Dorsolateral prefrontal cortex (tissue), 120 donors: ENCODE measurements at regions of chr5 and their contacts with region 1.

Region 1: GRCh38 chr5:141618804-141619554 is at the start of gene DIAPH1:
- DNase-seq: peak; percentile 76 to 95 (median 88)
- H3K4me3 ChIP-seq: peak within 1 kb of the TSS; percentile 57 to 96 (median 84)
- H3K27ac ChIP-seq: peak within 1 kb of the TSS in 57 of 59 donors; percentile 7 to 93 (median 78)
- H3K27me3 ChIP-seq: no peaks in the 10 kb centered on the region
- CTCF ChIP-seq: peak; percentile 93 to 100 (median 98)
- total RNA-seq, gene DIAPH1: 19.5 to 72.5 (median 48.1) TPM

Region 2: DNA sequence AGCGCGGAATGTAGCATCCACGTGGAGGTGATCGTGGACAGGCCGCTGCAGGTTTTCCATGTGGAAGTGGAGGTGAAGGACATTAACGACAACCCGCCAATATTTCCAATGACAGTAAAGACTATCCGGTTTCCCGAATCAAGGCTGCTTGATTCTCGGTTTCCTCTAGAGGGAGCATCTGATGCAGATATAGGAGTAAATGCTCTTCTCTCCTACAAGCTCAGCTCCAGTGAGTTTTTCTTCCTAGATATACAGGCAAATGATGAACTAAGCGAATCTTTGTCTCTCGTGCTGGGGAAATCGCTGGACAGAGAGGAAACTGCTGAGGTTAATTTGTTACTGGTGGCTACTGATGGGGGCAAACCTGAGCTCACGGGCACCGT is 823.7 kb before region 1 on chr5:
- intact Hi-C with region 1: no loop called
- DNase-seq: no peak
- H3K4me3 ChIP-seq: peak overlapping the region in 49 of 59 donors; percentile 7 to 64 (median 43)
- H3K27ac ChIP-seq: peak overlapping the region in 1 of 59 donors; percentile 47
- H3K27me3 ChIP-seq: peaks cover 0 to 21% (median 0%) of the 10 kb centered on the region in 45 donors
- CTCF ChIP-seq: peak in 38 of 56 donors; percentile 7 to 56 (median 32)

Region 3: DNA sequence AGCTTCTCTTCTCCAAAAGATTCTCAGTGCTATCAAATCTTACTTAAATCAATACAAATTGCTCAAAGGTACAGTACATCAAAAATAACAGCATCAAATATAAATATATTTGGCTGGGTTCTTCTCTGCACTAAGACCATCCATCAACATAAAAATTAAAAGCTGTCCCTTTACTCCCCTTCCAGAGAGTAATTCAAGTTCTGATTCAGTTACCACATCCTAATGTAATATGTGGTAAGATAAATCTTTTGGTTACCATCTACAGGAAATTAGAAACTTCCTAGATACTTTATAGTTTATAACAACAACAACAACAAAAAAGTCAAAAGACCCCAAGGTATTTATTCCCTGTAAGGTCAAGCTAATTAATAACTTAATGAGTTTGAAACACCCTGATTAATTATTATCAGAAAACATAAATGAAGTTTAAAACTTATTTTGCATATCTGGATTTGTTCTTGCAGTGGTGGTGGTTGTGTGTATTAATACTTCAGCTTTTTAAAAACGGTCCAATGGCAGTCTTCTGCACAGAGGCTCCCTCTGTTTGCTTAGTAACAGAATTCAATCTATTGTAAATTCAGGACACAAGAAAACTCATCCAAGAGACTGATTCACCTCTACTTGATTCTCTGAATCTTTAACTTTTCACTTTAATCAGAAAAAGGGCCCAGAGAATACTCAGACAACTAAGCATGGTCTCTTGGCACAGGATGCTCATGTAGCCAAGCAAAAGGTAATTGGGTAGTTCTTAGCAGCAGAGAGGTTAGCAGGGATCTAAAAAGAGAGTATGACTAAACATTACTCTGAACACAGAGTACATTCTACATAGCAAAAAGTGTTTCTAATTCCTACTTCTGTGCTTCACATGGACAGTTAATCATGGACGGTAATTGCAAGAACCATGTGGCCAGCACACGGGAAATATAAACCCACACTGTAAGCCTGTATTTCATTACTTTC is 20.3 kb before region 1 on chr5:
- intact Hi-C with region 1: loop called (anchors 2 kb)
- DNase-seq: no peak
- H3K4me3 ChIP-seq: no peak overlapping the region
- H3K27ac ChIP-seq: peak overlapping the region in 40 of 59 donors; percentile 2 to 77 (median 42)
- H3K27me3 ChIP-seq: no peaks in the 10 kb centered on the region
- CTCF ChIP-seq: no peak